ENCODE measurements at regions of chr11 and their contacts with region 1.

Region 1: GRCh38 chr11:46238967-46239800 is 38.3 kb upstream of the CREB3L1 start:
- DNase-seq: peak; percentile 74 to 98 (median 82)

Region 2: DNA sequence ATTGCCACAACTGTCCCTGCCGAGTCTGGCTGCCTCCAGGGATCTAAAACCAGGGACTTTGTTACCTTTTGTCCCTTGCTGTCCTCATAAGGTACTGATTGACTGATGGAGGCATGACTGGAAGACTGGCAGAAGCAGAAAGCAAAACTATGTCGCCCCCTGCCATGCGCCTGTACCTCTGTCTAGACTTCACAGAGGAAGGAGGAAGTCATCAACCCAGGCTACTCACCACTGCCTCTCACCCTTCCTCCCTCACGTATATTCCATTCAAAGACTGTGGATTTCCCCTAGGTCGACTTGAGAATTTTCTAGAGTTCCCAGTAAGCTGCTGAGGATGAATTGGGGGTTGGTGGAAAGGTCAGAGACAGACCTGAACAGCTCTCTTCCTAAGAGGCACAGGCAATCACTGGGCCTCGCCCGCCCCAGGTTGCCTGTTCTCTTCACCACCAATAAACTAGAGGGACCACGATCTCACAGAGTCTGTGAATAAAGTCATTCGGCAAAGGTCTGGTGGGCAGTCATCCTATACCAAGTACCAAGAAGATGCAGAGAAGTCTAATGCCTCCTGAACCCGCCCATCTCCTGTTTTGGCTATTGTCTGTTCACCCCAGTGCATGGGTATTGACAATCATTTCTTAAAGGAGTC is 546.3 kb before region 1 on chr11:
- intact Hi-C with region 1: no loop called
- DNase-seq: no peak

Region 3: DNA sequence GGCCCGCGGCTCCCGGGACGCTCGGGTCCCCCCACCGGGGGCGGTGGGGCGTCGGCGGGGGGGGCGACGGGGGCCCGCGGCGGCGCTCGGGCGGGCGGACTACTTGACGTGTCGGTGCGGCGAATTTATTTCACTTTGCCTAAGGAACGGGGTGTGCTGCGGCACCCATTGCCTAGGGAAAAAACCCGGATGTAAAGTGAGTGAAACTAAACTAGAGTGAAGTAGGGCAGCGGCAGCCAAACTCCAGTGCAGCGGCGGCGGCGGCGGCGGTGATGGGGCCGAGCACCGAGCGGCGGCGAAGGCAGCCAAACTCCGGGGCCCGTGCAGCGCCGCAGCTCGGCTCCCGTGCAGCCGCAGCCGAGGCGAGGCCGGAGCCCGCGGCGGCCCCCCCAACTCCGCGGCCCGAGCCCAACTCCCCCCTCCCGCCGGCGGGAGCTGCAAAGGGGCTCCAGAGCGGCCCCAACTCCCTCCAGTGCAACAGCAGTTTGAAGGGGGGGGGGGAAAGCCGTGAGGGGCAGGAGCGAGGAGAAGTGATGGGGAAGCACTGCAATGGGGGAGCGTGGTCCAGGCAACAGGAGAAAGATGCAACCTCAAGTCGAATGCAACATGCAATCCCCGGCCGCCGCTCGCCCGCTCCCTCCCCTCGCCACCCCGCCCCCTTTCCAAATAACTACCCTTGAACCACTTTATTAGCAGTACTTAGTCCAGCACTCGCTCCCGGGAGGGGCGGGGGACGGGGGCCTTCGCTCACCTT is 117.3 kb before region 1 on chr11:
- intact Hi-C with region 1: loop called (anchors 5 kb)
- DNase-seq: peak; percentile 58 to 94 (median 66)

Region 4: GRCh38 chr11:46308631-46309419 is 69.6 kb after region 1 on chr11:
- intact Hi-C with region 1: loop called (anchors 1 kb)
- DNase-seq: peak; percentile 38 to 96 (median 79)

Region 5: GRCh38 chr11:46346886-46347636 is 107.9 kb after region 1 on chr11 and contains the start of gene DGKZ:
- intact Hi-C with region 1: loop called (anchors 5 kb)
- DNase-seq: peak; percentile 73 to 99 (median 89)